ENCODE measurements at regions of chr1 and their contacts with region 1.

Region 1: GRCh38 chr1:166479052-166479631 is 312.3 kb upstream of the FAM78B start:
- DNase-seq: peak; percentile 79
- ATAC-seq: peak; percentile 40; the same call in 1 of the 2 replicates
- H3K4me3 ChIP-seq: no peak overlapping the region
- H3K27ac ChIP-seq: no peak overlapping the region
- H3K4me1 ChIP-seq: 0 out of 2 replicates have a peak, but pooled peaks cover under 1% of the 10 kb centered on the region
- H3K27me3 ChIP-seq: peaks cover 28% of the 10 kb centered on the region; the same call in 1 of the 2 replicates
- CTCF ChIP-seq: peak; percentile 92

Region 2: DNA sequence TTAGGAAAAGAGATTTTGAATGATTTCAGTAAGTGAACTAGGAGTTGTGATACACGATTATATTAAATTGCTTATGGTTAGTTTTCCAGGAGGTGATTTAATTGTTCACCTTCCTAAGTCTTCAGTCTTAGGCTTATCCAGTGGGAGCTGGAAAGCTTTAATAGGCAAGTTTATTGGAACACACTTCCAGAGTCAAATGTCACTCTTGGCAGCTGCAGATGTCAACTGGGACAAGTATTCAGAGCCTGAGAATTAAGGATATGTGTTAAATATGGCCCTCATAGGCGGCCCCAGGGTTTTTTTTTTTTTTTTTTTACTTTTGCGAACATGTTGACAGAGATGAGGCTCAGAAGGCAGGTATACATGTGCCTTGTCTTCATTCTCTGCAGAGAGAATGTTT is 622.5 kb before region 1 on chr1:
- CTCF ChIA-PET with region 1: no interaction called
- POLR2A ChIA-PET with region 1: interaction called, 10 read pairs
- intact Hi-C with region 1: no loop called
- DNase-seq: no peak
- ATAC-seq: peak; percentile 49; the same call in 1 of the 2 replicates
- H3K4me3 ChIP-seq: no peak overlapping the region
- H3K27ac ChIP-seq: no peak overlapping the region
- H3K4me1 ChIP-seq: peaks cover 6% of the 10 kb centered on the region
- H3K27me3 ChIP-seq: no peaks in the 10 kb centered on the region
- CTCF ChIP-seq: no peak

Region 3: GRCh38 chr1:166133276-166133841 is 345.8 kb before region 1 on chr1:
- CTCF ChIA-PET with region 1: no interaction called
- POLR2A ChIA-PET with region 1: no interaction called
- intact Hi-C with region 1: loop called (anchors 2 kb)
- DNase-seq: peak; percentile 62
- ATAC-seq: no peak
- H3K4me3 ChIP-seq: no peak overlapping the region
- H3K27ac ChIP-seq: no peak overlapping the region
- H3K4me1 ChIP-seq: no peaks in the 10 kb centered on the region
- H3K27me3 ChIP-seq: peaks cover 7% of the 10 kb centered on the region; the same call in 1 of the 2 replicates
- CTCF ChIP-seq: peak; percentile 83

Region 4: DNA sequence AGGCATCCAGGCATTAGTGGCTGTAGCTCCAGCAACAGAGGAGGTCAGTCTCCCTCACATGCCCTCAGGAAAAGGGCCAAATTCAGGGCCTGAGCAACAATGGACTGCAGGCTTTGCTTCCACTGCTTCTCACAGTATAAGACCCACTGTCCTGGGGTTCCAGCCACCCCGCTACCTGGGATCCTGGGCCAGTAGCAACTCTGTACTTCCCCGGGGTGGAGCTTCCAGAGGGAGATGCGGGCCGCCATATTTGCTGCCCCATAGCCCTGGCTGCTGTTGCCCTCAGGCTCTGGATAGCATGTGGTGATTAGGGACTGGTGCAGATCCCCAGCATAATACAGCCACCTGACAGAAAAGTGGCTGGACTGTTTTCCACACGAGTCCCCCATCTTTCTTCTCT is 159.0 kb after region 1 on chr1:
- CTCF ChIA-PET with region 1: no interaction called
- POLR2A ChIA-PET with region 1: no interaction called
- intact Hi-C with region 1: no loop called
- DNase-seq: no peak
- ATAC-seq: no peak
- H3K4me3 ChIP-seq: no peak overlapping the region
- H3K27ac ChIP-seq: no peak overlapping the region
- H3K4me1 ChIP-seq: no peaks in the 10 kb centered on the region
- H3K27me3 ChIP-seq: peaks cover 28% of the 10 kb centered on the region
- CTCF ChIP-seq: no peak

Region 5: DNA sequence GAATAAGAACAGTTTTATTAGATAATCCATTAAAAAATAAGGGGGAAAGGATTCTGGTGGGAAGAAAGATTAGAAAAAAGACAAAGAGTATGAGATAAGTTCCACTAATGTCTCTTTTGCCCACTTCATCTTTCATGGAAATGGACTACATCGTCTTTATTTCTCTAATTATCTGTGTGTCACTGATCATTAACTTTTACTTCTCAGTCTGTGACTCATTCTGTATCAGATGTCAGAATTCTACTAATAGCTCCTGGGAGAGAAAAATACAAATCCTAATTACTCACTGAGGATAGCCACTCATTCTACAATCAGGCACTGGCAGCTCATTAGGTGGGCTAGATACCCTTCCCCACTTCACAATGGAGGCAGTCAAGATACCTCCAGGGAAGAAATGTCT is 454.5 kb after region 1 on chr1:
- CTCF ChIA-PET with region 1: no interaction called
- POLR2A ChIA-PET with region 1: no interaction called
- intact Hi-C with region 1: no loop called
- DNase-seq: peak; percentile 37
- ATAC-seq: no peak
- H3K4me3 ChIP-seq: no peak overlapping the region
- H3K27ac ChIP-seq: no peak overlapping the region
- H3K4me1 ChIP-seq: no peaks in the 10 kb centered on the region
- H3K27me3 ChIP-seq: peaks cover 87% of the 10 kb centered on the region
- CTCF ChIP-seq: no peak

Region 6: GRCh38 chr1:166975361-166976129 is 496.4 kb after region 1 on chr1 and contains the start of gene ILDR2:
- CTCF ChIA-PET with region 1: no interaction called
- POLR2A ChIA-PET with region 1: no interaction called
- intact Hi-C with region 1: no loop called
- DNase-seq: peak; percentile 10
- ATAC-seq: peak; percentile 70
- H3K4me3 ChIP-seq: peak within 1 kb of the TSS; percentile 66
- H3K27ac ChIP-seq: no peak within 1 kb of the TSS
- H3K4me1 ChIP-seq: no peaks in the 10 kb centered on the region
- H3K27me3 ChIP-seq: peaks cover 87% of the 10 kb centered on the region
- CTCF ChIP-seq: no peak
- total RNA-seq, gene ILDR2: under 0.01 TPM in 1 of 2 replicates, not detected in the other

Measured in PC-3 (cell line).